GM10248 (cell line): ENCODE measurements at regions of chr14 and their contacts with region 1.

Region 1: GRCh38 chr14:91177073-91178034 is 63.5 kb downstream of the DGLUCY start:
- DNase-seq: peak; percentile 76
- CTCF ChIP-seq: peak; percentile 73

Region 2: DNA sequence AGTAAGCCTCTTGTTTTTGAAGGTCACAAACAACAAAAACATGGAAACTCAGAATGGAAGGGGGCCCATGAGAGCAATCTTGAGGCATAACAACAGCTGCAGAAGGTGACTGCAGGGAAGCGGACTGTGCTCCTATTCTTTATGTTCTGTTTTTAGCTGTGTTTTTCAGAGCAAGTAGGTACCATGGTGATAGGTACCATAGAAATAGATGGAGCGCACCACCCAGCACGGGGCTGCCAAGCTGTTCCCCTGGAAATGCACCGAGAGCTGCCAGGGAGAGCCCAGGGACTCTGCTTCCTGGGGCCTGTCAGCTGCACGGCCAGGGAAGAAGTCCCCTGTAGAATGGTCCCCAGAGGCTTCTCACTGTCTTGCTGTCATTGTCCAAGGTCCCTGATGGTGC is 30.7 kb before region 1 on chr14:
- CTCF ChIA-PET with region 1: interaction called, 10 read pairs
- POLR2A ChIA-PET with region 1: no interaction called
- DNase-seq: no peak
- CTCF ChIP-seq: no peak

Region 3: GRCh38 chr14:91164685-91165084 is 12.7 kb before region 1 on chr14:
- CTCF ChIA-PET with region 1: interaction called, 76 read pairs
- POLR2A ChIA-PET with region 1: no interaction called
- DNase-seq: no peak
- CTCF ChIP-seq: no peak

Region 4: GRCh38 chr14:91244501-91244901 is 67.1 kb after region 1 on chr14 and contains the start of gene GPR68:
- CTCF ChIA-PET with region 1: interaction called, 17 read pairs
- POLR2A ChIA-PET with region 1: no interaction called
- DNase-seq: no peak
- CTCF ChIP-seq: no peak

Region 5: GRCh38 chr14:91281346-91281745 is 104.0 kb after region 1 on chr14:
- CTCF ChIA-PET with region 1: interaction called, 197 read pairs
- POLR2A ChIA-PET with region 1: no interaction called
- DNase-seq: no peak
- CTCF ChIP-seq: no peak

Region 6: DNA sequence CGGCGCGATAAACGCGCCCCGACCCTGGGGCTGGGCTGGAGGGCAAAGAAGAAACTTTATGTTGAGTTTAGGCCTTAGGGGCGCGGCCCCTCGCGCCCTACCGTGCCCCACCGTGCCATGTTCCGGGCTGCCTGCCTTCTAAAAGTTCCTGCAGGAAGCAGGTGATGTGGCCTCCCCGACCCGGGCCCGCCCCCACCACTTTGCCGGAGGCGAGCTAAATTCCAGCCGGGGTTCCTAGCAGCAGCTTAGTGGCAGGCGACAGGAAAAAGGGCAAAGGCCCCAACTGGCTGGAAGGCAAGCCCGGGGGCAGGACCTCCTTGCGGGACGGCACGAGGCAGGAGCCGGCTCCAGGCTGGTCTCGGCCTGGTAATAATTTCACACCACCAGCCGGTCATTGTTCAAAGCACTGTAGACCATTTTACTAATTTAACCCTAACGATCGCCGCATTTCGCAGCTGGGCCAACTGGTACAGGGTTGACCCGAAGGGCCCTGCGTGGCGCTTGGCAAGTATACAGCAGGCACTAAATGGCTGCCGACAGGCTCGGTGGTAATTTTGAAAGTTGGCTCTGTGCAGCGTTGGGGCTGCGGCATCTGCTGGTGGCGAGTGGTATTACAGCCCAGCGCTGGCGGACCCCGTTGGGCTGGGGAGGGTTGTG is 241.2 kb after region 1 on chr14:
- CTCF ChIA-PET with region 1: interaction called, 15 read pairs
- POLR2A ChIA-PET with region 1: no interaction called
- DNase-seq: peak; percentile 56
- CTCF ChIP-seq: peak; percentile 91